ENCODE measurements at regions of chr3 and their contacts with region 1.

Region 1: DNA sequence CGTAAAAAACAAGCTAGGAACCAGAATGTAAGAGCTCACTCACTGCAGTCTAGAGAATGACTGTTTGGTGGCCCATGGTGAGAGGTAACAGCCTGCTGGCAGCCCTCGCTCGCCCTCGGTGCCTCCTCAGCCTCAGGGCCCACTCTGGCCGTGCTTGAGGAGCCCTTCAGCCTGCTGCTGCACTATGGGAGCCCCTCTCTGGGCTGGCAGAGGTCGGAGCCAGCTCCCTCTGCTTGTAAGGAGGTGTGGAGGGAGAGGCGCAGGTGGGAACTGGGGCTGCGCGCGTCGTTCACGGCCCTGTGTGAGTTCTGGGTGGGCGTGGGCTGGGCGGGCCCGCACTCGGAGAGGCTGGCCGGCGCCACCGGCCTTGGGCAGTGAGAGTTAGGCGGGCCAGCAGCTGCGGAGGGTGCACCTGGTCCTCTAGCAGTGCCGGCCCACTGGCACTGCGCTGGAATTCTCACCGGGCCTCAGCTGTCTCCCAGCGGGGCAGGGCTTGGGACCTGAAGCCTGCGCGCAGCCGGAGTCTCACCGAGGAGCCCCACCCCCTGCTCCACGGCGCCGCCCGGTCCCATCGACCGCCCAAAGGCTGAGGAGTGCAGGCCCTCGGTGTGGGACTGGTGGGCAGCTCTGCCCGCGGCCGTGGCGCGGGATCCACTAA is 420.6 kb downstream of the RBMS3 start:
- DNase-seq: peak in 1 of 2 donors; percentile 71
- ATAC-seq: no peak
- H3K4me3 ChIP-seq: no peak overlapping the region
- H3K27ac ChIP-seq: no peak overlapping the region
- H3K4me1 ChIP-seq: peaks cover 3% of the 10 kb centered on the region in 2 donors
- H3K27me3 ChIP-seq: no peaks in the 10 kb centered on the region

Region 2: DNA sequence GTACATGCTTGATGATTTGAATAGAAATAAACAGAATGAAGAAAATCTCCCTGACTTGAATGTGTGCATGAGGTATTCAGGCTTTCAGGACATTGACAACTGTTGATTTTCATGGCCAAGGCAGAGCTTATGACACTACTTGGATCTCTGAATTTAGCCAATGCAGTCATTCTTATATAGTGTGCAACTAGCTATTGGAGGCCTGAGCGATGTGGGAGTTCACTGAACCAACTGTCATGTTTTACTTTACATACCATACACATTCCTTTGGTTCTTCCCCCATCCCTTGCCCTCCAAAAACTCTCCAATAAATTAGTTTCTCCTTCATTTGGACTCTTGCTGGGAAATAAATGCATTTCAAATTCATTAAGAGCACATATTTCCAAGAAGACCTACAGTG is 39.8 kb after region 1 on chr3:
- intact Hi-C with region 1: loop called in 1 of 2 experiments (anchors 5 kb)
- DNase-seq: no peak
- ATAC-seq: no peak
- H3K4me3 ChIP-seq: no peak overlapping the region
- H3K27ac ChIP-seq: no peak overlapping the region
- H3K4me1 ChIP-seq: peaks cover 2 to 9% of the 10 kb centered on the region in 2 donors
- H3K27me3 ChIP-seq: no peaks in the 10 kb centered on the region